Activated B cell treated with CpG ODN at 0.5 μM for 24 hours (primary cell): ENCODE measurements at regions of chr19 and their contacts with region 1.

Region 1: DNA sequence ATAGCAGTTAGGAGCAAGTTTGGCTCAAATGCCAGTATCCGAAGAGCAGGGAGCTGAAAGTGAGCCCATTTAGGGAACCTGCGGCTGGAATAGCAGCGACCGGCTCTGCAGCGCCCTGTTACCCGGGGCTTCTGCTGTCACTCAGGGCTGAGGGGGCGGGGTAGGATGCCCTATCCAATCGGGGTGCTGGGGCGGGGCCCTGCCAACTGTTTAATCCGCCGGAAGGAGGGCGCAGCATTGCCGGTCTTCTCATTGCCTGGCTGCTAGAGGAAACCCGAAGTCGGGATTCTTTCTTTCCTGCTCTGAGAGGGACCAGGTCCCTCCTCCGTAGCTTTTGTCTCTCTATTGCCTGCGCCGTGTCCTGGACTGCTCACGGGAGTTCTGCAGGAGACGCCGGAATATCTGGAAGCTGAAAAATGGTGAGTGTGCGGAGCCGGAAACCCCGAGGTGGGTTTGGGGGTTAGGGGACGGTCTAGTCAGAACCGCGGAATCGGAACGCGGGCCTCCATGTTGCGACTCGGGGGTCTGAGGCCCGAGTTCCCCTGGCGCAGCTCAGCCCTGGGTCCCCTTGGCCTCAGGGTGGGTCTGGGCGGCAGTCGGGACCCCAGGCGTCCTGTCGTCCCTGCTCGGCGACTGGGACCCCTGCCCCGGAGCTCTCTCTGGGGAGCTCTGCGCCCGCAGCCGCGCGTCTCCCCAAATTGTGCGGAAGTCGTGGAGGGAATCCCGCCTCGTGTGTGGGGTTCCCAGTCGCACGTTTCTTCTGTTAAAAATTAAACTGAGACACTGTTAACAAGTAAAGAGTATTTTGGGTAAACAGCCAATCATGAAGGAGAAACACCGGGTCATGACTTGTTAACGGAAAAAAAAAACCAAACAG is 22.8 kb downstream of the ZNF763 start:
- DNase-seq: peak; percentile 85
- ATAC-seq: peak; percentile 96
- H3K4me3 Mint-ChIP-seq: peak overlapping the region; percentile 99
- H3K27ac Mint-ChIP-seq: peak overlapping the region; percentile 97
- H3K4me1 Mint-ChIP-seq: peaks cover 31% of the 10 kb centered on the region
- H3K27me3 Mint-ChIP-seq: no peaks in the 10 kb centered on the region
- CTCF ChIP-seq: no peak

Region 2: GRCh38 chr19:11814029-11814699 is 173.5 kb before region 1 on chr19 and contains the start of gene ZNF440:
- CTCF ChIA-PET with region 1: interaction called, 3 read pairs
- POLR2A ChIA-PET with region 1: interaction called, 8 read pairs
- intact Hi-C with region 1: loop called (anchors 5 kb)
- DNase-seq: peak; percentile 83
- ATAC-seq: peak; percentile 99
- H3K4me3 Mint-ChIP-seq: peak within 1 kb of the TSS; percentile 92
- H3K27ac Mint-ChIP-seq: peak within 1 kb of the TSS; percentile 84
- H3K4me1 Mint-ChIP-seq: peaks cover 28% of the 10 kb centered on the region
- H3K27me3 Mint-ChIP-seq: no peaks in the 10 kb centered on the region
- CTCF ChIP-seq: no peak
- total RNA-seq, gene ZNF440: 17.7 and 18.5 TPM in 2 replicates

Region 3: GRCh38 chr19:11964858-11965645 is 22.6 kb before region 1 on chr19 and contains the start of gene ZNF763:
- CTCF ChIA-PET with region 1: interaction called, 66 read pairs
- POLR2A ChIA-PET with region 1: interaction called, 96 read pairs
- intact Hi-C with region 1: loop called (anchors 1 kb)
- DNase-seq: peak; percentile 79
- ATAC-seq: peak; percentile 92
- H3K4me3 Mint-ChIP-seq: peak within 1 kb of the TSS; percentile 93
- H3K27ac Mint-ChIP-seq: peak within 1 kb of the TSS; percentile 97
- H3K4me1 Mint-ChIP-seq: peaks cover 26% of the 10 kb centered on the region
- H3K27me3 Mint-ChIP-seq: no peaks in the 10 kb centered on the region
- CTCF ChIP-seq: no peak
- total RNA-seq, gene ZNF763: 9.8 and 10.0 TPM in 2 replicates

Region 4: GRCh38 chr19:12000152-12000981 is 12.7 kb after region 1 on chr19:
- CTCF ChIA-PET with region 1: interaction called, 3 read pairs
- POLR2A ChIA-PET with region 1: interaction called, 24 read pairs
- intact Hi-C with region 1: loop called (anchors 1 kb)
- DNase-seq: peak; percentile 23
- ATAC-seq: peak; percentile 84
- H3K4me3 Mint-ChIP-seq: peak overlapping the region; percentile 63
- H3K27ac Mint-ChIP-seq: peak overlapping the region; percentile 82
- H3K4me1 Mint-ChIP-seq: peaks cover 31% of the 10 kb centered on the region
- H3K27me3 Mint-ChIP-seq: no peaks in the 10 kb centered on the region
- CTCF ChIP-seq: no peak

Region 5: GRCh38 chr19:12052497-12053169 is 65.0 kb after region 1 on chr19 and contains the start of gene ZNF878:
- CTCF ChIA-PET with region 1: interaction called, 3 read pairs
- POLR2A ChIA-PET with region 1: interaction called, 4 read pairs
- intact Hi-C with region 1: loop called (anchors 2 kb)
- DNase-seq: peak; percentile 48
- ATAC-seq: peak; percentile 90
- H3K4me3 Mint-ChIP-seq: peak within 1 kb of the TSS; percentile 87
- H3K27ac Mint-ChIP-seq: peak within 1 kb of the TSS; percentile 27
- H3K4me1 Mint-ChIP-seq: peaks cover 12% of the 10 kb centered on the region
- H3K27me3 Mint-ChIP-seq: peaks cover 4% of the 10 kb centered on the region
- CTCF ChIP-seq: no peak
- total RNA-seq, gene ZNF878: 1.2 and 1.6 TPM in 2 replicates

Region 6: GRCh38 chr19:12139885-12140547 is 152.4 kb after region 1 on chr19 and contains the start of gene ZNF20:
- CTCF ChIA-PET with region 1: interaction called, 14 read pairs
- POLR2A ChIA-PET with region 1: interaction called, 17 read pairs
- intact Hi-C with region 1: loop called (anchors 1 kb)
- DNase-seq: peak; percentile 85
- ATAC-seq: peak; percentile 96
- H3K4me3 Mint-ChIP-seq: peak within 1 kb of the TSS; percentile 97
- H3K27ac Mint-ChIP-seq: peak within 1 kb of the TSS; percentile 83
- H3K4me1 Mint-ChIP-seq: peaks cover 33% of the 10 kb centered on the region
- H3K27me3 Mint-ChIP-seq: no peaks in the 10 kb centered on the region
- CTCF ChIP-seq: no peak
- total RNA-seq, gene ZNF20: 4.2 and 8.5 TPM in 2 replicates

Region 7: DNA sequence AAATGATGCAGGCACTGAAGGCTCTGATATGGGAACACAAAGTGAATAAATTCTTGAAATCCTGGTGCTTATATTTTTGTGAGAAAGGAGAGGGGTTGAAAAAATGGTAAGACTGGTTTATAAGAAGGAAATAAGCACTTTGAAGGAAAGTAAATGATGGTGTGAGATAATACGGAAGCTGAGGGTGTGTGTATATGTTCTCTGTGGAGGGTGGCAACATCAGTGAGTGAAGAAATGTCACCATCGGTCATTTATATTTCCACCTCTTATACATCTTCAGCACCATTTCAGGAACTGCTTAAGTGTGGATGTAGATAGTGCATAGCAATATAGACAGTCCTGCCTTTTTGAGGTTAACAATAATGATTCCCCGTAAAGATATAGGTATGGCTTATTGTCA is 192.7 kb after region 1 on chr19:
- CTCF ChIA-PET with region 1: no interaction called
- POLR2A ChIA-PET with region 1: no interaction called
- intact Hi-C with region 1: no loop called
- DNase-seq: no peak
- ATAC-seq: no peak
- H3K4me3 Mint-ChIP-seq: no peak overlapping the region
- H3K27ac Mint-ChIP-seq: no peak overlapping the region
- H3K4me1 Mint-ChIP-seq: peaks cover 17% of the 10 kb centered on the region
- H3K27me3 Mint-ChIP-seq: no peaks in the 10 kb centered on the region
- CTCF ChIP-seq: no peak

Region 8: GRCh38 chr19:13339869-13340268 is 1352.2 kb after region 1 on chr19:
- CTCF ChIA-PET with region 1: no interaction called
- POLR2A ChIA-PET with region 1: no interaction called
- intact Hi-C with region 1: no loop called
- DNase-seq: no peak
- ATAC-seq: no peak
- H3K4me3 Mint-ChIP-seq: no peak overlapping the region
- H3K27ac Mint-ChIP-seq: no peak overlapping the region
- H3K4me1 Mint-ChIP-seq: no peaks in the 10 kb centered on the region
- H3K27me3 Mint-ChIP-seq: peaks cover 14% of the 10 kb centered on the region
- CTCF ChIP-seq: no peak